ENCODE measurements at regions of chr5 and their contacts with region 1.

Region 1: GRCh38 chr5:59799668-59800346 is 93.7 kb downstream of the PDE4D start:
- DNase-seq: no peak
- H3K4me3 Mint-ChIP-seq: no peak overlapping the region
- H3K27ac Mint-ChIP-seq: no peak overlapping the region
- H3K4me1 Mint-ChIP-seq: no peaks in the 10 kb centered on the region
- H3K27me3 Mint-ChIP-seq: peaks cover 5% of the 10 kb centered on the region

Region 2: DNA sequence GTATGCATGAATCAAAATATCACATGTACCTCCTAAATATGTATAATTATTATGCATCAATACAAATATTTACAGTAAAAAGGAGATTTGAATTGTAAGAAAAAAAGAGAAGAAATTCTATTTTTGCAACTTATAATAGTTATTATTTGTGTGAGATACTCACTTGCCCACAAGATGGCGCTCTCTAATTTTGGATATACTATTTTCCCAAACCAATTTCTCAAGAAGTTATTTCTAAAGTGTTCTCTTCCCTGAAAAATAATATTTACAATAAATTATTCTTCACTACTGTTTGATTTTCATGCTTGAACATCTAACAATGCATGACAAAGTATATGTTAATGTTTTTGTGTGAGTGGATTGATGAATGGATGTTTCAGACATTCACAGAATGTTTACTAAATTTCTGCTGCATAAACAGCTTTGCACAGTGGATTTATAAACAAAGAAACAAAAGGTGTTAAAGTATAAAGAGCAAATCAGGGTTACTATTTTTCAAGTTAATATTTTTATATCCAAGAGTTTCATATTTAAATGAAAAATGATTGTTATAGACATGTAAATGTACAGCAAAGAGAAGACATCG is 409.6 kb before region 1 on chr5:
- CTCF ChIA-PET with region 1: interaction called, 31 read pairs
- DNase-seq: peak; percentile 21
- H3K4me3 Mint-ChIP-seq: no peak overlapping the region
- H3K27ac Mint-ChIP-seq: no peak overlapping the region
- H3K4me1 Mint-ChIP-seq: no peaks in the 10 kb centered on the region
- H3K27me3 Mint-ChIP-seq: peaks cover 12% of the 10 kb centered on the region

Region 3: GRCh38 chr5:59506285-59506877 is 293.4 kb before region 1 on chr5:
- CTCF ChIA-PET with region 1: interaction called, 25 read pairs
- DNase-seq: no peak
- H3K4me3 Mint-ChIP-seq: no peak overlapping the region
- H3K27ac Mint-ChIP-seq: no peak overlapping the region
- H3K4me1 Mint-ChIP-seq: no peaks in the 10 kb centered on the region
- H3K27me3 Mint-ChIP-seq: no peaks in the 10 kb centered on the region